ENCODE measurements at regions of chr10 and their contacts with region 1.

Region 1: GRCh38 chr10:125742465-125742864 is 23.0 kb downstream of the EDRF1 start:
- DNase-seq: no peak
- ATAC-seq: peak; percentile 29; the same call in 1 of the 2 replicates
- H3K4me3 ChIP-seq: no peak overlapping the region
- H3K27ac ChIP-seq: no peak overlapping the region
- H3K4me1 ChIP-seq: no peaks in the 10 kb centered on the region
- H3K27me3 ChIP-seq: no peaks in the 10 kb centered on the region
- CTCF ChIP-seq: 0 out of 2 replicates have a peak, but pooled peaks have one; percentile 8
- POLR2A ChIP-seq: no peak
- RAD21 ChIP-seq: no peak

Region 2: DNA sequence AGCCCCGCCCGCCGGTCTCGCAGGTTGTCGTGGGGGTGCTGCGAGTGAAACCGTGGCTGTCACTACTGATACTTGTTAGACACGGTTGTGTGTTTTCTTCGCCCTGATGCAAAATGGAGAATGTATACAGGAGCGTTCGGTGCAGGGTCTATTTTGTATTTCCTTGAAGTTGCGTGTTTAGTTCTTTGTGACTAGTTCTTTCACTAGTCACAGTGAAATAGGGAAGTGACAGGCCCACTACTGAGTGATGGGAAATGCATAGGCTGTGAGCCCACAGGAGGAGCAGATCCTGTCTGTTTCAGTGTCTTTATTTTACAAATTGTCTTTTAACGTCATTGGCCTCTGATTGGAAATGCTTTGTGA is 940.2 kb before region 1 on chr10:
- CTCF ChIA-PET with region 1: no interaction called
- POLR2A ChIA-PET with region 1: no interaction called
- dilution Hi-C with region 1: no loop called
- in situ Hi-C with region 1: loop called (anchors 25 kb)
- intact Hi-C with region 1: no loop called
- DNase-seq: no peak
- ATAC-seq: peak; percentile 2; the same call in 1 of the 2 replicates
- H3K4me3 ChIP-seq: peak overlapping the region; percentile 67
- H3K27ac ChIP-seq: peak overlapping the region; percentile 31; the same call in 1 of the 2 replicates
- H3K4me1 ChIP-seq: no peaks in the 10 kb centered on the region
- H3K27me3 ChIP-seq: no peaks in the 10 kb centered on the region; the same call in 1 of the 2 replicates
- CTCF ChIP-seq: no peak
- POLR2A ChIP-seq: no peak
- RAD21 ChIP-seq: no peak

Measured in IMR-90 (cell line).